ENCODE measurements at regions of chr1 and their contacts with region 1.

Region 1: DNA sequence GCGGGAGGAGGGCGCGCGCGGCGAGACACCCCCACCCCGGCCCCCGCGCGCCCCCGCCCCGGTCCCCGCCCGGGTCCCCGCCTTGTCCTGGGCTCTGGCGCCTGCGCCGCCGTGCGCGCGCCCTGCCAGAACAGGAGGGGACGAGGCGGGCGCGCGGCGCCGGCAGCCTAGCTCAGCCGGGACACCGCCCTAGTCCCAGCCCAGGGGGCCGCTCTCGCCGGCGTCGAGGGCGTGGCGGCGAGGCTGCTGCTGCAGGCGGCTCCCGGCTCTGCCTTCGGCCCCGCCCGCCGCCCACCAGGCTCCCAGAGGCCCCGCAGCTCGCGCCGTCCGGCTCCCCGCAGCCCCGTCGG is at the start of gene RCAN3:
- DNase-seq: peak; percentile 93
- ATAC-seq: peak; percentile 86
- H3K4me3 ChIP-seq: peak within 1 kb of the TSS; percentile 66 to 92 (median 83)
- H3K4me3 Mint-ChIP-seq: peak within 1 kb of the TSS; percentile 97
- H3K27ac ChIP-seq: peak within 1 kb of the TSS; percentile 93 to 94
- H3K27ac Mint-ChIP-seq: peak within 1 kb of the TSS; percentile 96
- H3K4me1 ChIP-seq: peaks cover 43 to 46% of the 10 kb centered on the region in 2 donors
- H3K4me1 Mint-ChIP-seq: peaks cover 55% of the 10 kb centered on the region
- H3K27me3 ChIP-seq: no peaks in the 10 kb centered on the region
- H3K27me3 Mint-ChIP-seq: no peaks in the 10 kb centered on the region
- CTCF ChIP-seq: no peak
- total RNA-seq, gene RCAN3: 35.1 and 37.3 TPM in 2 replicates

Region 2: DNA sequence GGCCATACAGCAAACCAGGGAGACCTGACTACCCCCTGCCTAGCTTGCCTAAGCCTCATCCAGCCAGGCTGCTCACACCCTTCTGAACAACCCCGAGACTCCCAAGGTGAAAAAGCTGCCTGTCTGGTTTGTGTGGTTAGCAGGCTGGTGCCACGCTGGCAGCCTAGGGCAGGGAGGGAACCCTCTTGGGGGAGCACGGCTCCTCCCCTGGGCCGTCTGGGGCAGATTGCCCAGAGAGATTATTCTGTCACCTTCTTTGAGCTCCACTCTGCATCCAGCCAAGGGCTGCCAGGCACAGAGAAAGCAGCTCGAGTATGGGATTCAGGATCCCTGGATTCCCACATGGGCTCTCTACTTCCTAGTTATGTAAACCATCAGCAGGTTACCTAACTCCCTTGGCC is 1050.7 kb before region 1 on chr1:
- CTCF ChIA-PET with region 1: no interaction called
- POLR2A ChIA-PET with region 1: no interaction called
- intact Hi-C with region 1: no loop called
- DNase-seq: no peak
- ATAC-seq: no peak
- H3K4me3 ChIP-seq: no peak overlapping the region
- H3K4me3 Mint-ChIP-seq: no peak overlapping the region
- H3K27ac ChIP-seq: no peak overlapping the region
- H3K27ac Mint-ChIP-seq: no peak overlapping the region
- H3K4me1 ChIP-seq: no peaks in the 10 kb centered on the region
- H3K4me1 Mint-ChIP-seq: no peaks in the 10 kb centered on the region
- H3K27me3 ChIP-seq: peaks cover 0 to 4% (median 0%) of the 10 kb centered on the region in 4 experiments
- H3K27me3 Mint-ChIP-seq: peaks cover 16% of the 10 kb centered on the region
- CTCF ChIP-seq: no peak

Region 3: GRCh38 chr1:24186993-24187805 is 315.5 kb before region 1 on chr1 and contains the start of gene IFNLR1:
- CTCF ChIA-PET with region 1: interaction called, 4 read pairs
- POLR2A ChIA-PET with region 1: no interaction called
- intact Hi-C with region 1: loop called (anchors 1 kb)
- DNase-seq: peak; percentile 87
- ATAC-seq: peak; percentile 57
- H3K4me3 ChIP-seq: peak within 1 kb of the TSS; percentile 65 to 85 (median 77)
- H3K4me3 Mint-ChIP-seq: peak within 1 kb of the TSS; percentile 95
- H3K27ac ChIP-seq: peak within 1 kb of the TSS; percentile 82
- H3K27ac Mint-ChIP-seq: peak within 1 kb of the TSS; percentile 93
- H3K4me1 ChIP-seq: peaks cover 69 to 78% of the 10 kb centered on the region in 2 donors
- H3K4me1 Mint-ChIP-seq: peaks cover 83% of the 10 kb centered on the region
- H3K27me3 ChIP-seq: no peaks in the 10 kb centered on the region
- H3K27me3 Mint-ChIP-seq: no peaks in the 10 kb centered on the region
- CTCF ChIP-seq: no peak
- total RNA-seq, gene IFNLR1: 38.0 and 39.7 TPM in 2 replicates

Region 4: DNA sequence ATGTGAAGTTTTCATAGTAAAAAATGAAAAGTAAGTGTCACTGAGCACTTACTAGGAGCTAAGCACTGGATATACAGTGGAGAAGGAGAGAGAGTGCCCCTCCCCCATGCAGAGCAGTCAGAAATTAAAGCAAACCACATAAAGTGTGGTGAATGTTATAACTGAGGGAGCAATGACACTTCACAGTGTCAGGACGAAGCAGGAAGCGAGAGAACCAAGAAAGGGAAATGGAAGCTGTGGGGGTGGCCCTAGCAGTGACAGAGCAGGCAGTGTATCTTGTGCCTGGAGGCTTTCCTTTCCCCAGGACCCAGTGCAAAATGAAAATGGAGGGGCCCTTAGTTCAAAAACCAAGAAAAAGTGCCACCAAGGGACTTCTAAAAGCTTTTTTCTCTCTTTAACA is 21.6 kb before region 1 on chr1:
- CTCF ChIA-PET with region 1: interaction called, 7 read pairs
- POLR2A ChIA-PET with region 1: interaction called, 5 read pairs
- intact Hi-C with region 1: loop called (anchors 2 kb)
- DNase-seq: peak; percentile 71
- ATAC-seq: peak; percentile 90
- H3K4me3 ChIP-seq: peak overlapping the region in 1 of 5 experiments; percentile 59
- H3K4me3 Mint-ChIP-seq: peak overlapping the region; percentile 75
- H3K27ac ChIP-seq: peak overlapping the region; percentile 52 to 75
- H3K27ac Mint-ChIP-seq: peak overlapping the region; percentile 92
- H3K4me1 ChIP-seq: peaks cover 17 to 22% of the 10 kb centered on the region in 2 donors
- H3K4me1 Mint-ChIP-seq: peaks cover 27% of the 10 kb centered on the region
- H3K27me3 ChIP-seq: no peaks in the 10 kb centered on the region
- H3K27me3 Mint-ChIP-seq: no peaks in the 10 kb centered on the region
- CTCF ChIP-seq: no peak

Region 5: DNA sequence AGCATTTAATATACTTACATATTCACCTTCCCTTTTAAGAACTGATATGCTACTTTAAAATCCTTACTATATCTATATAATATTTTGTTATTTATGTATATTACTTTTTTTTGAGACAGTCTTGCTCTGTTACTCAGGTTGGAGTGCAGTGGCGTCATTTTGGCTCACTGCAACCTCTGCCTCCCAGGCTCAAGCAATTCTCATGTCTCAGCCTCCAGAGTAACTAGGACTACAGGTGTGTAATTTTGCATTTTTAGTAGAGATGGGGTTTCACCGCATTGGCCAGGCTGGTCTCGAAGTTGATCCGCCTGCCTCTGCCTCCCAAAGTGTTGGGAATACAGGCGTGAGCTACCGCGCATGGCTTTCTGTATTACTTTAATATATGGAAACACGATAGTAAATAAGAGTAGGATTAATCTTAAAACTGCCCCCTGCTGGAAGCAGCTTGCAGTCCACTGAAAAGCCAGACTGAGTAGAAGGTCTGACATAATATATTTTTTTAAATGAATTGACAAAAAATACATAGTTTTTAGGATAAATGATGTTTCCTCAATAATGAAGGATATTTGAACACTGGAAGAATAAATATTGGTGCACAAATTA is 24.4 kb after region 1 on chr1:
- CTCF ChIA-PET with region 1: interaction called, 18 read pairs
- POLR2A ChIA-PET with region 1: no interaction called
- intact Hi-C with region 1: no loop called
- DNase-seq: peak; percentile 47
- ATAC-seq: no peak
- H3K4me3 ChIP-seq: no peak overlapping the region
- H3K4me3 Mint-ChIP-seq: no peak overlapping the region
- H3K27ac ChIP-seq: no peak overlapping the region
- H3K27ac Mint-ChIP-seq: no peak overlapping the region
- H3K4me1 ChIP-seq: no peaks in the 10 kb centered on the region
- H3K4me1 Mint-ChIP-seq: peaks cover 3% of the 10 kb centered on the region
- H3K27me3 ChIP-seq: no peaks in the 10 kb centered on the region
- H3K27me3 Mint-ChIP-seq: no peaks in the 10 kb centered on the region
- CTCF ChIP-seq: peak; percentile 71

Region 6: DNA sequence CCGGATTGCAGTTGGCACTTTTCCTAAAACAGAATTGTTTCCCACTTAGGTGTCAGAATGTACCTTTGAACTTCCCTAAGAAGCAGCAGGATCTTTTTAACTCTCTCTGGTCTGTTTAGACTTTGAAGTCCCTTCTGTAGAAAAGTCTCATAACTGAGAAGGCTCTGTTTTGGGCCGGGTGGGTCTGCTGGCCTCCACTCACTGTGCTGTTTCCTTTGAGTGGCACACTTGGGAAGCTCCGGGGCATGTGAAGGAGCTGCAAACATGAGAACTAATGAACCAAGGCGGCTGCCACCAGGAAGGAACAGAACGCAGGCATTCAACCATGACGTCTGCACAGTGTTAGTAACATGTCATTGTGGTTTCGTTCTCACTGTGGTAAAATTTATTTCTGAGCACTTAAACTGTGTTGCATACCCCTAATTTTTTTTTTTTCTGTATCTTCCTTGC is 33.7 kb after region 1 on chr1:
- CTCF ChIA-PET with region 1: interaction called, 6 read pairs
- POLR2A ChIA-PET with region 1: interaction called, 3 read pairs
- intact Hi-C with region 1: loop called (anchors 1 kb)
- DNase-seq: peak; percentile 85
- ATAC-seq: peak; percentile 76
- H3K4me3 ChIP-seq: peak overlapping the region in 3 of 5 experiments; percentile 19 to 45 (median 20)
- H3K4me3 Mint-ChIP-seq: peak overlapping the region; percentile 83
- H3K27ac ChIP-seq: peak overlapping the region; percentile 74 to 97
- H3K27ac Mint-ChIP-seq: peak overlapping the region; percentile 98
- H3K4me1 ChIP-seq: peaks cover 54 to 60% of the 10 kb centered on the region in 2 donors
- H3K4me1 Mint-ChIP-seq: peaks cover 68% of the 10 kb centered on the region
- H3K27me3 ChIP-seq: no peaks in the 10 kb centered on the region
- H3K27me3 Mint-ChIP-seq: no peaks in the 10 kb centered on the region
- CTCF ChIP-seq: no peak